Activated B cell treated with CpG ODN at 0.5 μM for 24 hours (primary cell): ENCODE measurements at regions of chr13 and their contacts with region 1.

Region 1: GRCh38 chr13:50055454-50055853 is 40.2 kb downstream of the KCNRG start:
- DNase-seq: no peak
- ATAC-seq: no peak
- H3K4me3 Mint-ChIP-seq: no peak overlapping the region
- H3K27ac Mint-ChIP-seq: peak overlapping the region; percentile 8
- H3K4me1 Mint-ChIP-seq: peaks cover 32% of the 10 kb centered on the region
- H3K27me3 Mint-ChIP-seq: no peaks in the 10 kb centered on the region
- CTCF ChIP-seq: no peak

Region 2: GRCh38 chr13:50015258-50015657 is 40.2 kb before region 1 on chr13 and contains the start of gene KCNRG:
- CTCF ChIA-PET with region 1: no interaction called
- POLR2A ChIA-PET with region 1: interaction called, 9 read pairs
- intact Hi-C with region 1: loop called (anchors 5 kb)
- DNase-seq: no peak
- ATAC-seq: no peak
- H3K4me3 Mint-ChIP-seq: no peak within 1 kb of the TSS
- H3K27ac Mint-ChIP-seq: peak within 1 kb of the TSS; percentile 43
- H3K4me1 Mint-ChIP-seq: peaks cover 33% of the 10 kb centered on the region
- H3K27me3 Mint-ChIP-seq: no peaks in the 10 kb centered on the region
- CTCF ChIP-seq: no peak
- total RNA-seq, gene KCNRG: 1.9 and 3.1 TPM in 2 replicates

Region 3: DNA sequence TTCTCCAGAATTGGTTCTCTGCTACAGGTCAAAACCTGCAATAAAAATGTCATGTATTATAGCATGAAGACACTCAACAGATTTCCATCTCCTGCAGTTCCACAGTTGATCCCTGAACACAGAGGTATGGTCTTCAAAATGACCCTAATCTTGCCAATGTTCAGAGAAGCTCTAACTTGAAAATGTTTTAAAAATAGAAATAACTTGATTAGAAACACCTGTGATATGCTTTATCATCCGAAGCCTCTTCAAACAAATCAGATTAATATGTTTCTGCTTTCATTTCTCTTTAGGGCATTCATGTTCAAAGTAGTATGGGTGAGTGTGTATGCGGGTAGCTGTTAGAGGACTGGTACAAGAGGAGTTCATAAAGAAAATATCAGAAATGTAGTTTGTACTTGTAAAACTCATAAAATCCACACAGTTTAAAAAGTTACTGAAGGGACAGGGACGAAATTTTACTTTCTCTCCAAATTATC is 20.2 kb after region 1 on chr13:
- CTCF ChIA-PET with region 1: no interaction called
- POLR2A ChIA-PET with region 1: interaction called, 9 read pairs
- intact Hi-C with region 1: loop called (anchors 2 kb)
- DNase-seq: no peak
- ATAC-seq: peak; percentile 53
- H3K4me3 Mint-ChIP-seq: peak overlapping the region; percentile 73
- H3K27ac Mint-ChIP-seq: peak overlapping the region; percentile 87
- H3K4me1 Mint-ChIP-seq: peaks cover 63% of the 10 kb centered on the region
- H3K27me3 Mint-ChIP-seq: no peaks in the 10 kb centered on the region
- CTCF ChIP-seq: no peak